ENCODE measurements at regions of chr1 and their contacts with region 1.

Region 1: GRCh38 chr1:204213668-204214662 is at the start of gene GOLT1A:
- DNase-seq: peak; percentile 90
- total RNA-seq, gene GOLT1A: not detected

Region 2: GRCh38 chr1:203163891-203164635 is 1049.9 kb before region 1 on chr1:
- intact Hi-C with region 1: no loop called
- DNase-seq: no peak

Region 3: GRCh38 chr1:204162231-204163074 is 51.5 kb before region 1 on chr1:
- intact Hi-C with region 1: loop called in 1 of 2 experiments (anchors 5 kb)
- DNase-seq: peak; percentile 92

Region 4: GRCh38 chr1:204296431-204296988 is 82.5 kb after region 1 on chr1:
- intact Hi-C with region 1: no loop called
- DNase-seq: no peak

Region 5: DNA sequence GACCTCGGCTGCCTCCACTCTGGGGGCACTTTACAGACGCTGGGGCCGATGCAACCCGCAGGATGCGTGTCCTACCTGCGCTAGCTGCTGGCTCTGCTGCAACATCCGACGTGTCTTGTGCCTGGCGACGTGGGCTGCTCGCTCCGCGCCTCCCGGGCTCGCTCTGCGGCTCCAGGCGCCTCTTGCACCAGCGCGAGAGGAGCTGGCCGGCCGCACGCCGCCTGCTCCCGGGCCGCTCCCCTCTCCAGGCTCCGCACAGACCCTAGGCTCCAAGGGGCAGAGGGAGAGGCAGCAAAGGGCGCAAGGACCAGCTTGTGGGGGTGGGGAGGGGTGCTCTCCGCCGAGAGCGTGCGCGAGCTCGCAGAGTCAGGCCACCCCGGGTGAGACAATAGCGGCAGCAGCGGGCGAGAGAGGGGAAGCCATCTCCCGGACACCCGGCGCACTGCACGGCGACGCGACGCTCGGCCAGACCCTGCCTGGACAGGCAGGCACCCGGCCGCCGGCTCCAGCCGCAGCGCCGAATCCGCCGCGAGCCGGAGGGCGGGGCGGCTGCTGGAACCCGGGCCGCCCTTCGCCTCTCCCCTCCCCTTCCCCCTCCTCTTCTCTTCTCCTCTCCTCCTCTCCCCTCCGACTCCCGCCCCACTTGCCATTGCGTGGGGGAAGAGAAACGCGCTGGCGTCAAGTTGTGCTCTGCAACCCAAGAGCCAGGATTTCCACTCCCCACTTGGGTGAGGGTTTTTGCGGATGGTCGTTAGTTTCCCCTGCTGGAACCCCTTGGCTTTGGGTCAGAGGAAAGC is 280.5 kb after region 1 on chr1 and contains the start of gene PIK3C2B:
- intact Hi-C with region 1: no loop called
- DNase-seq: peak; percentile 95
- total RNA-seq, gene PIK3C2B: 33.7 to 36.9 TPM

Measured in posterior vena cava (tissue), 2 donors.